ENCODE measurements at regions of chr15 and their contacts with region 1.

Region 1: DNA sequence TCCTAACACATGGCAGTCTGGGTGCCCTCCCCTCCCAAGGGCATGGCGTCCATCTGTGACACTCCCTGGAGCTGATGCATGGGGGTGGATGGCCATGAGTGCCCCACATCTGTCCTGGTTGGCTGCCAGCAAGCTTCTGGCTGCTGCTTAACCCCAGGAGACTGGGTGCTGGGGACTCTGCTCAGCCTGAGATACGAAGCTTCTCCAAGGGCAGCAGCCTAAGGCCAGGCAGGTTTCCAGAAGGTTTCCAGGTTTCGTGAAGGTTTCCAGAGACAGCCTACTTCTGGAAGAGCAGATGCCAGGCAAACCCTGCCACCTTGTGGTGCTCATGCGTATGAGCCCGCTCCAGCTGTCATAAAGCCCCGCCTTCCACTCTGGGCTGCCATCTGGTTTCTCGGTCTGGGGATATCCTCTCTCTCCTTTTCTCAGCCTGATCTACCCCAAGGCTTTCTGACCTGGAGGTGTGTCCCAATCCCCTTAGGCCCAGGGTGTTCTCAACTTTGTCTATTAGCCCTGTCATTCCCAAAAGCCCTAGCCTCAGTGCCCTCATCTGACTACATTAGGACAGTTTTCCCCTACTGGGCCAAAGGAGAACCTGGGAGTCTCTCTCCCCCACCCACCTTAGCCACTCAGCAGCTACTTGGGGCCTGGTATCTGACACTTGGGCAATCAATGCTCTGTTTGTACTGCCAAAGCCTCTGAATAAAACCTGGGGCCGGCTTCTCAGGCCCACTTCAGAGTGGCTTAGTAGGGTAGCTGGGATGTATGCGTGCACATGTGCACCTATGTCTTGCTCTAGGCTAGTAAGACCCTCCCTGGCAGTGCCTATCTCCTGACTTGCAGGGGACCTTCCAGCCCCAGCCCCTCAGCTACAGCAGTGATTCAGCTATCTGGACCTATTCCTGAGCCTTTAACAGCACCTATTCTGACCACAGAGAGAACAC is 12.0 kb downstream of the MRPL46 start:
- DNase-seq: peak; percentile 73
- ATAC-seq: peak; percentile 91
- H3K4me3 Mint-ChIP-seq: no peak overlapping the region
- H3K27ac Mint-ChIP-seq: no peak overlapping the region
- H3K4me1 Mint-ChIP-seq: peaks cover 5% of the 10 kb centered on the region
- H3K27me3 Mint-ChIP-seq: no peaks in the 10 kb centered on the region

Region 2: GRCh38 chr15:88246666-88247446 is 208.3 kb before region 1 on chr15:
- CTCF ChIA-PET with region 1: interaction called, 94 read pairs
- POLR2A ChIA-PET with region 1: no interaction called
- intact Hi-C with region 1: loop called (anchors 1 kb)
- DNase-seq: peak; percentile 82
- ATAC-seq: peak; percentile 92
- H3K4me3 Mint-ChIP-seq: no peak overlapping the region
- H3K27ac Mint-ChIP-seq: no peak overlapping the region
- H3K4me1 Mint-ChIP-seq: peaks cover 5% of the 10 kb centered on the region
- H3K27me3 Mint-ChIP-seq: peaks cover 2% of the 10 kb centered on the region

Region 3: DNA sequence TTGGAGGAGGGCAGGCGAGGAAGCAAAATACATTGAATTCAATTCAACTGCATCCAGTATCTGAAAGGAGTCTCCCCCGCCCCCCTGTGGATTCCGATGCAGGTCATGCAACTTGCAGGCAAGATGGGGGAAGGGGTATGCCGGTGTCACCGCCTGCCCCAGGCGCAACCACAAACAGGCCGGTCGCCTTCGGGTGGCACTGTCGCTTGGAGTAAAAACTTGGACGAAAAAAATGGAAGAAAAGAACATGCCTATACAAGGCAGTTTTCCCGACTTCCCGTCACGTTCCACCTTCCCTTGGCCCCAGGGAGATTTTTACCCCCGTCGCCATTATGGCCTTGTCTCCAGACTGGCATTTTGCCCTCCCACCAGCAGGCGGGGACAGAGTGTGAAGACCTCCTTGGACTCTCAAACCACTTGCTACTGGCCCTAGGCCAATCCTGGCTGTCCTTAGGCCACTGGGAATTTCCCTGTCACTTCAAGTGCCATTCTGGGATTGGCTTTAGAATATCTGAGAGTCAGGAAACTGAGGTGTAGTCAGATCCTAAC is 197.0 kb before region 1 on chr15:
- CTCF ChIA-PET with region 1: interaction called, 3 read pairs
- POLR2A ChIA-PET with region 1: no interaction called
- intact Hi-C with region 1: loop called in 1 of 2 experiments (anchors 5 kb)
- DNase-seq: peak; percentile 59
- ATAC-seq: no peak
- H3K4me3 Mint-ChIP-seq: peak overlapping the region; percentile 64
- H3K27ac Mint-ChIP-seq: no peak overlapping the region
- H3K4me1 Mint-ChIP-seq: peaks cover 23% of the 10 kb centered on the region
- H3K27me3 Mint-ChIP-seq: peaks cover 50% of the 10 kb centered on the region

Region 4: GRCh38 chr15:88274553-88275460 is 180.3 kb before region 1 on chr15:
- CTCF ChIA-PET with region 1: interaction called, 5 read pairs
- POLR2A ChIA-PET with region 1: no interaction called
- intact Hi-C with region 1: loop called (anchors 1 kb)
- DNase-seq: peak; percentile 81
- ATAC-seq: peak; percentile 82
- H3K4me3 Mint-ChIP-seq: no peak overlapping the region
- H3K27ac Mint-ChIP-seq: no peak overlapping the region
- H3K4me1 Mint-ChIP-seq: no peaks in the 10 kb centered on the region
- H3K27me3 Mint-ChIP-seq: peaks cover 16% of the 10 kb centered on the region

Region 5: DNA sequence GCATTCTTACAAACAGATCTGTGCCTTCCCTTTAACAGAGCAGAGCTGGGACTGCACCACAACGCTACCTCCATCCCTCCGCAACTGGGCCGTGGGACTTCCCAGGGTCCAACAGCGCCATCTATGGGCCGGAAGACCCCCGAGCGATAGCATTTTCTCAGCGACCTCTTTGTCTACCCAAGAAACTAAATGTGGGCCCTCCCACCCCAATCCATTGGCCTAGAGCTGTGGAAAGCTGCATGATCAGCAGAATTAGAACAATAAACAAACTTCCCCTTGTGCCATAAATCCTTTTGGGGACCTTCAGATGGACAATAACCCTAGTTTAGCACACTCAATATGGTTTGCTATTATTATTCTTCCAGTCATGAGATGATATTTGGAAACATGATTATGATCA is 123.9 kb before region 1 on chr15:
- CTCF ChIA-PET with region 1: interaction called, 5 read pairs
- POLR2A ChIA-PET with region 1: no interaction called
- intact Hi-C with region 1: loop called (anchors 2 to 5 kb)
- DNase-seq: peak; percentile 82
- ATAC-seq: peak; percentile 72
- H3K4me3 Mint-ChIP-seq: no peak overlapping the region
- H3K27ac Mint-ChIP-seq: no peak overlapping the region
- H3K4me1 Mint-ChIP-seq: no peaks in the 10 kb centered on the region
- H3K27me3 Mint-ChIP-seq: peaks cover 6% of the 10 kb centered on the region

Region 6: DNA sequence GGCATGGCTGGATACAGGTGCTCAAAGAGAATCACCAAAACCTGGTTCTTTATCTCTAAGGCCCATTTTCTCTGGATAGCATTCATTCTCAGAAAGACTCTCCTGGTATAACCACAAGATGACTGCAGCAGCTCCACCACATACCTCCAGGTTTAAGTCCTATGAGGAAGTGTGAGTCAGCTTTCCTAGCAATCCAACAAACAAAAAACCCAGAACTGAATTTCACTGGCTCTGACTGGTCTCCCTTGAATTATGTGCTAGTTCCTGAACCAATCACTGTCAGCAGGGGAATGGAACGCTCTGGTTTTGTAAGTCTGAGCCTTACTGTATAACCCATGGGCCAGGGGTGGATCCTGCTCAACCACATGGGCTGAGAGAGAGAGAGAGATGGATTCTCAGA is 15.1 kb before region 1 on chr15:
- CTCF ChIA-PET with region 1: interaction called, 10 read pairs
- POLR2A ChIA-PET with region 1: no interaction called
- intact Hi-C with region 1: no loop called
- DNase-seq: peak; percentile 12
- ATAC-seq: peak; percentile 63
- H3K4me3 Mint-ChIP-seq: no peak overlapping the region
- H3K27ac Mint-ChIP-seq: no peak overlapping the region
- H3K4me1 Mint-ChIP-seq: peaks cover 4% of the 10 kb centered on the region
- H3K27me3 Mint-ChIP-seq: peaks cover 36% of the 10 kb centered on the region

Region 7: DNA sequence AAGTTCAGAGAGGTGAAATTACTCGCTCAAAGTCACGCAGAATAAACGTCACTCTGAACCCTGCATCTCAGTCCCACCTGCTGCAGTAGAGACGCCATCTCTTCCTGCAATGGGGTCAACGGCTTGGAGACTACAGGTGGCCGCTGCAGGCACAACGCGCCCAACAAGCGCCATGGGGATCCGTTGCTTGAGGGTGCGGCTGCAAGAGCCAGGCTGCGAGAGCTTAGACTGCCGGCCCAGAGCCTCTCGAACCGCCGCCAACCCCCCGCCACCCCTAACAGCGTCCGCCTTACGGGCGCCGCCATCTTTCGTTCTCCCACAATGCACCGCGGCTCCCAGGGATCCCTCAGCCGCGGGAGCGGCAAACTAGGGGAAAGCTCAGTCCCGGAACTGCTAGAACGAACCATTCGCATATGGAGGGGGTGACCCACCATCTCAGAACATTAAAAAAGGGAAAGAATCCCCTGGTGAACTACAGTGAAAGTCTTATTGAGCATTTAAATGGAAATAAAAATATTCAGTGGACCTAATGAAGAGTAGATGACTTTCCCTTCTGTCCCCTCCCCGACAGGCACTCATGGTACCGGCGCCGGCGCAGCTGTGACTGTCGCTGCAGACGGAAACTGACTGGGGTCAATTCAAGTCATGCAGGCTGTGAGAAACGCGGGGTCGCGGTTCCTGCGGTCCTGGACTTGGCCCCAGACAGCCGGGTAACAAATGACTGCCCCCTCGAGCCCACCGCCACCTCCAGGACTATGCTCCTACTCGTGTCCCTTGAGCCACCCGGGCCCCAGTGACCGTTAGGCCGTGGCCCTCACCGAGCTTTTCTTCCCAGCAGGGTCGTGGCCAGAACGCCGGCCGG is 12.2 kb after region 1 on chr15 and contains the starts of genes MRPL46 and MRPS11:
- CTCF ChIA-PET with region 1: interaction called, 16 read pairs
- POLR2A ChIA-PET with region 1: interaction called, 3 read pairs
- intact Hi-C with region 1: no loop called
- DNase-seq: peak; percentile 94
- ATAC-seq: peak; percentile 84
- H3K4me3 Mint-ChIP-seq: peak within 1 kb of the TSS; percentile 86
- H3K27ac Mint-ChIP-seq: peak within 1 kb of the TSS; percentile 98
- H3K4me1 Mint-ChIP-seq: peaks cover 26% of the 10 kb centered on the region
- H3K27me3 Mint-ChIP-seq: no peaks in the 10 kb centered on the region
- total RNA-seq, gene MRPL46: 31.0 to 35.6 TPM
- total RNA-seq, gene MRPS11: 58.3 to 67.1 TPM

Measured in activated CD4-positive, alpha-beta T cell treated with anti-CD3 and anti-CD28 coated beads for 36 hours (primary cell).